ENCODE measurements at regions of chr12 and their contacts with region 1.

Region 1: DNA sequence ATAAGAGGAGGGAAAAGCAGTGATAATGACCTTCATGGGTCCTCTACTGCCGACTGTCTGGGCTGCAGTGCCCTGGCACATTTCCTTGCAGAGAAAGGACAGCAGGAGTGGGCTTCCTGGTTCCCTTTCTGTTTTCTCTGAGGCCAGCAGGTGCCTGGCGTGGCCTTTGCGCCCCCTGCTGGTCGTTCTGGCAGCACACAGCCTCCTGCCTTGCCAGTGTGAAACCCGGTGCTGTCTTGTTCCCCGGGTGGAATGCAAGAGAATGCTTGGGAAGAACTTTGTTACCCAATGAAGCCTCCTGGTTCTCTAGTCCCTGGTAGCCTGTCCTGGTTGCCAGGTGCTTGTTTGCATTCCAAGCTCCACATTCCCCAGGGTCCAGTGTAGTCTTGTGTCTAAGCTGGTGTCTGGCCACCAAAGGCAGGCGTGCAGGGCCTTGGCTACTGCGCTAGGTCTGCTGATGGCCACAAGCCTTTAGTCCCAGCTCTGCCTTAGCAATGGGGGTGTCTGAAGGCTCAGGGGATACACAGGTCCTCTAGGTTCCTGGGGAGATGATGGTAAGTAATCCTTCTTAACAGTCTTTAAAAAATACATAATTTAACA is 1392.4 kb upstream of the TMEM132C start:
- DNase-seq: peak in 4 of 5 donors; percentile 15 to 34 (median 22)
- H3K4me3 ChIP-seq: no peak overlapping the region
- H3K27ac ChIP-seq: no peak overlapping the region
- H3K4me1 ChIP-seq: no peaks in the 10 kb centered on the region
- H3K27me3 ChIP-seq: no peaks in the 10 kb centered on the region
- CTCF ChIP-seq: peak in 1 of 3 donors; percentile 20
- EP300 ChIP-seq: no peak
- POLR2A ChIP-seq: no peak

Region 2: GRCh38 chr12:125178222-125178621 is 1696.3 kb before region 1 on chr12:
- intact Hi-C with region 1: loop called in 1 of 4 experiments (anchors 10 kb)
- DNase-seq: no peak
- H3K4me3 ChIP-seq: no peak overlapping the region
- H3K27ac ChIP-seq: no peak overlapping the region
- H3K4me1 ChIP-seq: peaks cover under 1% of the 10 kb centered on the region
- H3K27me3 ChIP-seq: no peaks in the 10 kb centered on the region
- CTCF ChIP-seq: no peak
- EP300 ChIP-seq: no peak
- POLR2A ChIP-seq: no peak

Measured in ovary (tissue), 10 donors.